Naive thymus-derived CD4-positive, alpha-beta T cell (primary cell): ENCODE measurements at regions of chrX and their contacts with region 1.

Region 1: DNA sequence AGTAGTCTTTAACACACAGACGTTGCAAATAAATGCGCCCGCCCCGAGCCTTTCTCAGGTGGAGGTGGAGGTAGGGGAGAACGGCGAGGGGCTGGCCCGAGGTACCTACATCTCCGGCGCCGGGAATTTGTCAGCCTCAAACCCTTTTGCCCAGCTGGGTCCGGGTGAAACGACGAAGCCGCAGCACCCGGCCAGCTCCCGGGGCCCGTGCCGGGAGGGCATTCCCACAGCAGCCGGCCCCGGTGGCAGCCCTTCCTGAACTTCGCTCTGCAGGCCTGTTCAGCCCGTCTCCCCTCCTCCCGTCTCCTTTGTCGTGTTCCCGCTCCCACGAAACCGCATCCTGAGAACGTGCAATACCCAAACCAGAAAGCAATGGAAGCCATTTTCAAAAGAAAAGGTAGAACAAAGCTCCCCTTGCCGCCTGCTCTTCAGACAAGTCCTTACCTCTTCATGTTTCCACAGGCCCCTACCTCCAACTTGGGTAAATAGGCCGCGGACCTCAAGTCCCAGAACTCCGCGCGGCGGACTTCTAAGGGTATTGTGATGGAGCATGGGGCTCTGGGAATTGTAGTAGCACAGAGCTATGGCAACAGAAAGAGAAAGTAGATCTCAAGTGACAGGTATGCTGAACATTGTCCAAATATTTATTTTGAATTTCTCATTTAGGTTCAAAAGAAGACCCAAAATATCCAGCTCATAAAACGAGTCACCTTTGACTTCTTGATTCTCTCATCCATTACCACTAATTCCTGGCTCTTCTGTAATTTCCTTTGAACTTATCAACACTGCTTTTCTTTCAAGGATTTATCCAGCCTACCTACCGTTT is at the start of gene RBM41:
- DNase-seq: peak; percentile 41 to 84 (median 73)
- ATAC-seq: peak; percentile 100
- H3K4me3 ChIP-seq: peak within 1 kb of the TSS; percentile 60
- H3K4me3 Mint-ChIP-seq: peak within 1 kb of the TSS; percentile 90 to 100 (median 99)
- H3K27ac ChIP-seq: peak within 1 kb of the TSS; percentile 80
- H3K27ac Mint-ChIP-seq: peak within 1 kb of the TSS; percentile 89 to 99 (median 97)
- H3K4me1 ChIP-seq: peaks cover 0 to 13% of the 10 kb centered on the region in 2 donors
- H3K4me1 Mint-ChIP-seq: peaks cover 21 to 51% (median 36%) of the 10 kb centered on the region in 7 donors
- H3K27me3 ChIP-seq: no peaks in the 10 kb centered on the region
- H3K27me3 Mint-ChIP-seq: no peaks in the 10 kb centered on the region
- total RNA-seq, gene RBM41: 11.5 to 31.3 (median 16.6) TPM

Region 2: DNA sequence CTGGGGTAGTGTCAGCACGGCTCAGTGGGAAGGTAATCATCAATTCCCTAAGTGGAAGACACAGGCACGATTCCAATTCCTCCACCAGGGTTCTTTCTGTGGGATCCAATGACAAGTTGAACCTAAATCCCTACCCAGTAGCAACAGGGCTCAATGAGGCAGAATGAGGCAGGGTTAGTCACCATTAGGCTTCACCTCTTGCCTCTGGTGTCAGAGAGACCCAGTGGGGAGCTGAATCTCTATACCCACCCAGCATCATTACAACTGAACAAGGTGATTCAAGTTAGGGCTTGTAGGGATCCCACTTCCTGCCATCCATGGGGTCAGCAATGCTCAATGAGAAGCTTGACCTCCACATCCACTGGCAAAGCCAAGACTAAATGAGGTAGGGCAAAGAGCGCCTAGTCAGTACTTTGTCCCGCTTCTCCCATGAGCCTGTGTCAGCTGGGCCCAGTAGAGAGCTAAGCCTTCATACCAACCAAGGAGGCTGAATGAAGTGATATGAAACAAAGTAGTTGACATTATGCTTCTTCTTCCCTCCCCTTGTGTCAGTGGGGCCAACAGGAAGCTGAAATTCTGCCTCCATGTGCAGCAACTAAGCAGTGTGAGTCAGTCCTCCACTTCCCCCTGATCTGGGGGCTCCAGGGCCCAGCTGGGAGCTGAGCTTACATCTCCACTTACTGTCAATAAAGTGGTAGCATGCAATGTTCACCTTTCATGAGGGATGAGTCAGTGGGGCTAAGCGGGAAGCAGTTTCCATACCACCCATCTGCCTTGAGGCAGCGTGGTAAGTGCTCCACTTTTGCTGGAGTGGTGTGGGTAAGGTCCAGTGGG is 36.5 kb after region 1 on chrX:
- CTCF ChIA-PET with region 1: no interaction called
- POLR2A ChIA-PET with region 1: no interaction called
- intact Hi-C with region 1: loop called in 1 of 2 experiments (anchors 2 kb)
- DNase-seq: peak in 2 of 9 donors; percentile 5 to 27
- ATAC-seq: peak; percentile 46
- H3K4me3 ChIP-seq: no peak overlapping the region
- H3K4me3 Mint-ChIP-seq: peak overlapping the region; percentile 66 to 86 (median 77)
- H3K27ac ChIP-seq: no peak overlapping the region
- H3K27ac Mint-ChIP-seq: peak overlapping the region in 5 of 9 donors; percentile 55 to 86 (median 72)
- H3K4me1 ChIP-seq: no peaks in the 10 kb centered on the region
- H3K4me1 Mint-ChIP-seq: peaks cover 0 to 15% (median 5%) of the 10 kb centered on the region in 7 donors
- H3K27me3 ChIP-seq: no peaks in the 10 kb centered on the region
- H3K27me3 Mint-ChIP-seq: no peaks in the 10 kb centered on the region

Region 3: DNA sequence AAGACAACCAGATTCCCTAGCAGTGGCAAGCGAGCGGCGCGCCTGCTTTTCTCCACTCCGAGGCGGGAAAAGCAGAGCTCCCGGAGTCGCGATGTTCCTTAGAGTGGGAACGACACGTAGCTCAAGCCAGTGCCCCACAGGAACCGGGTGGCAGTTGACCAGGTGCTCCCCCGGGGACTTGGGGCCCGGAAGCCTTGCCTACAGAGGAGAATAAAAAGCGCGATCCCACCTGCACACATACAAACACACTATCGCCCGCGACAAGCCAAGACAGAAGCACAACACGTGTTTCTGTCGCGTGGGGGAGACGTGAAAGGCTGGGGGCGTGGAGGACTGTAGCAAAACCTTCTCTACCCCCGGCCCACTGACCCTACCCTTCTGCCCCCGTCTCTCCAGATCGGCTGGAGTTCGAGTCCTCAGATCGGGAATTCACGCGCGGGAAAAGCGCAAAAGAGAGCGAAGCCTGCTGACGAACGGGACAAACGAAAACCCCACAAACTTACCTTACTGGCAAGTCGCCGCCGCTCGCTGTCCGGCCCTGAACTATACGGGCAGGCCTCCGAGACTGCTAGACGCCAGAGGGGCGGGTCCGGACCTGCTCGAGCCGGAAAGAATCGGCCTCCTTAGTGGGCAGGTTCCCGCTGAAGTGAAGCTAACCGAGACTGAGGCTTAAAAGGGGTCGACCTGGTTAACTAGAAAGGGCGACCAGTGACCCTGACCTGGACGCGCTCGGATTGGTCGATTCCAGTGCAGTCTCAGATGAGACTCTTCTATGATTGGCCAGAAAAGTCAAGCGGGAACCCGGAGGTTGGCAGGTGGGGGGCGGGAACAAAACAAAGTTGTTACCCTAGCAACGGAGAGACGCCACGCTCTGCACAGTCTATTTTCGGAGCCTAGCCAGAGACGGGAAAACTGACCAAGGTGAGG is 87.5 kb after region 1 on chrX and contains the starts of genes DNAAF6 and NUP62CL:
- CTCF ChIA-PET with region 1: no interaction called
- POLR2A ChIA-PET with region 1: no interaction called
- intact Hi-C with region 1: loop called (anchors 1 kb)
- DNase-seq: peak; percentile 28 to 75 (median 61)
- ATAC-seq: peak; percentile 94
- H3K4me3 ChIP-seq: peak within 1 kb of the TSS; percentile 72
- H3K4me3 Mint-ChIP-seq: peak within 1 kb of the TSS; percentile 80 to 93 (median 90)
- H3K27ac ChIP-seq: peak within 1 kb of the TSS; percentile 57
- H3K27ac Mint-ChIP-seq: peak within 1 kb of the TSS; percentile 28 to 84 (median 74)
- H3K4me1 ChIP-seq: no peaks in the 10 kb centered on the region
- H3K4me1 Mint-ChIP-seq: peaks cover 0 to 11% (median 3%) of the 10 kb centered on the region in 7 donors
- H3K27me3 ChIP-seq: no peaks in the 10 kb centered on the region
- H3K27me3 Mint-ChIP-seq: peaks cover 0 to 2% (median 0%) of the 10 kb centered on the region in 5 donors
- total RNA-seq, gene DNAAF6: not detected
- total RNA-seq, gene NUP62CL: 0.73 to 2.1 (median 1.6) TPM

Region 4: DNA sequence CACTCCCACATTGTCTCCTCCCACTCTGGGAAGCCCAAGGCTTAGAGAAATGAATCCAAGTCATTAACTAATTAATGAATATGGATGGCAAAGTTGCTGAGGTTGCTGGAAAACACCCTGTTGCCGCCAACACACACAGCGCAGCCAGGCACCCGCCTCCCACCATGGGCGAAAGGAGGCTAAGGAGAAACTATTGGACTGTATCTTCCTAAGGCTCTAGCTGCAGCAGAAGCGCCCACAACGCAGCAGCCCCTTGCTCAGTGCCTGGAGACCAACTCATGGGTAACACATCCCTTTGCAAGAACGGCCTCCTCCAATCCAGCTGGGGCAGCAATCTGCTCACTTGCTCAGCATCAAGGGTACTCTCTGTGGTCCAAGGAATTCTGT is 622.9 kb after region 1 on chrX:
- CTCF ChIA-PET with region 1: no interaction called
- POLR2A ChIA-PET with region 1: no interaction called
- intact Hi-C with region 1: loop called in 1 of 2 experiments (anchors 1 kb)
- DNase-seq: peak in 1 of 9 donors; percentile 10
- ATAC-seq: no peak
- H3K4me3 ChIP-seq: peak overlapping the region; percentile 45
- H3K4me3 Mint-ChIP-seq: peak overlapping the region; percentile 80 to 96 (median 85)
- H3K27ac ChIP-seq: peak overlapping the region; percentile 72
- H3K27ac Mint-ChIP-seq: peak overlapping the region; percentile 94 to 100 (median 99)
- H3K4me1 ChIP-seq: peaks cover 26 to 45% of the 10 kb centered on the region in 2 donors
- H3K4me1 Mint-ChIP-seq: peaks cover 15 to 70% (median 45%) of the 10 kb centered on the region in 7 donors
- H3K27me3 ChIP-seq: no peaks in the 10 kb centered on the region
- H3K27me3 Mint-ChIP-seq: peaks cover 0 to 7% (median 0%) of the 10 kb centered on the region in 5 donors

Region 5: DNA sequence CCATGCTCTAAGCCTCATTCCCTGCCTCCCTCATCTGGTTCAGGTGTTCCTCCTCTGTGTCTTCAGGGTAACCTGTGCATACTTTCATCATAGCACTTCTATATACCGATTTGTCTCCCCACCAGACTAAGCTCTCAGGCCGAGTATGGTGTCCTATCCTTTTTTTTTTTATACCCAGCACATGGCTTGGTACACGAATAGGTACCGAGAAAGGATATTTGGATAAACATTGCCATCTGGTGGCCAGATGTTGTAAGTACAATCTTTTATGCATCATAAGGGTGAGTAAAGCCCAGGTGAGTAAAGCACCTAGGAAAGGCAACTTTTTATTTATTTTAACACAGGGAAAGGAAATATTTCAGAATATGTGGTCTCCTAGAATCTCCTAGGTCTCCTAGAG is 775.5 kb after region 1 on chrX:
- CTCF ChIA-PET with region 1: no interaction called
- POLR2A ChIA-PET with region 1: no interaction called
- intact Hi-C with region 1: loop called in 1 of 2 experiments (anchors 10 kb)
- DNase-seq: peak in 7 of 9 donors; percentile 30 to 68 (median 61)
- ATAC-seq: peak; percentile 72
- H3K4me3 ChIP-seq: no peak overlapping the region
- H3K4me3 Mint-ChIP-seq: no peak overlapping the region
- H3K27ac ChIP-seq: no peak overlapping the region
- H3K27ac Mint-ChIP-seq: peak overlapping the region in 3 of 9 donors; percentile 20 to 90 (median 52)
- H3K4me1 ChIP-seq: no peaks in the 10 kb centered on the region
- H3K4me1 Mint-ChIP-seq: peaks cover 0 to 8% (median 0%) of the 10 kb centered on the region in 7 donors
- H3K27me3 ChIP-seq: no peaks in the 10 kb centered on the region
- H3K27me3 Mint-ChIP-seq: no peaks in the 10 kb centered on the region

Region 6: GRCh38 chrX:108091266-108091877 is 972.8 kb after region 1 on chrX and contains the starts of genes ATG4A and PSMD10:
- CTCF ChIA-PET with region 1: no interaction called
- POLR2A ChIA-PET with region 1: no interaction called
- intact Hi-C with region 1: loop called (anchors 1 kb)
- DNase-seq: peak; percentile 65 to 91 (median 85)
- ATAC-seq: peak; percentile 97
- H3K4me3 ChIP-seq: peak within 1 kb of the TSS; percentile 85
- H3K4me3 Mint-ChIP-seq: no peak within 1 kb of the TSS
- H3K27ac ChIP-seq: peak within 1 kb of the TSS; percentile 88
- H3K27ac Mint-ChIP-seq: no peak within 1 kb of the TSS
- H3K4me1 ChIP-seq: no peaks in the 10 kb centered on the region
- H3K4me1 Mint-ChIP-seq: peaks cover 0 to 28% (median 15%) of the 10 kb centered on the region in 7 donors
- H3K27me3 ChIP-seq: no peaks in the 10 kb centered on the region
- H3K27me3 Mint-ChIP-seq: no peaks in the 10 kb centered on the region
- total RNA-seq, gene ATG4A: 6.7 to 11.4 (median 7.5) TPM
- total RNA-seq, gene PSMD10: 17.6 to 36.8 (median 22.1) TPM